Activated B cell treated with CpG ODN at 0.5 μM for 24 hours (primary cell): ENCODE measurements at regions of chr1 and their contacts with region 1.

Region 1: GRCh38 chr1:12124693-12125421 is 41.9 kb upstream of the TNFRSF1B start:
- DNase-seq: peak; percentile 68
- ATAC-seq: peak; percentile 76
- H3K4me3 Mint-ChIP-seq: peak overlapping the region; percentile 50
- H3K27ac Mint-ChIP-seq: peak overlapping the region; percentile 64
- H3K4me1 Mint-ChIP-seq: peaks cover 32% of the 10 kb centered on the region
- H3K27me3 Mint-ChIP-seq: no peaks in the 10 kb centered on the region
- CTCF ChIP-seq: peak; percentile 91

Region 2: GRCh38 chr1:12087797-12088314 is 37.0 kb before region 1 on chr1:
- CTCF ChIA-PET with region 1: interaction called, 10 read pairs
- POLR2A ChIA-PET with region 1: no interaction called
- intact Hi-C with region 1: no loop called
- DNase-seq: peak; percentile 45
- ATAC-seq: peak; percentile 88
- H3K4me3 Mint-ChIP-seq: peak overlapping the region; percentile 53
- H3K27ac Mint-ChIP-seq: peak overlapping the region; percentile 95
- H3K4me1 Mint-ChIP-seq: peaks cover 45% of the 10 kb centered on the region
- H3K27me3 Mint-ChIP-seq: no peaks in the 10 kb centered on the region
- CTCF ChIP-seq: no peak

Region 3: DNA sequence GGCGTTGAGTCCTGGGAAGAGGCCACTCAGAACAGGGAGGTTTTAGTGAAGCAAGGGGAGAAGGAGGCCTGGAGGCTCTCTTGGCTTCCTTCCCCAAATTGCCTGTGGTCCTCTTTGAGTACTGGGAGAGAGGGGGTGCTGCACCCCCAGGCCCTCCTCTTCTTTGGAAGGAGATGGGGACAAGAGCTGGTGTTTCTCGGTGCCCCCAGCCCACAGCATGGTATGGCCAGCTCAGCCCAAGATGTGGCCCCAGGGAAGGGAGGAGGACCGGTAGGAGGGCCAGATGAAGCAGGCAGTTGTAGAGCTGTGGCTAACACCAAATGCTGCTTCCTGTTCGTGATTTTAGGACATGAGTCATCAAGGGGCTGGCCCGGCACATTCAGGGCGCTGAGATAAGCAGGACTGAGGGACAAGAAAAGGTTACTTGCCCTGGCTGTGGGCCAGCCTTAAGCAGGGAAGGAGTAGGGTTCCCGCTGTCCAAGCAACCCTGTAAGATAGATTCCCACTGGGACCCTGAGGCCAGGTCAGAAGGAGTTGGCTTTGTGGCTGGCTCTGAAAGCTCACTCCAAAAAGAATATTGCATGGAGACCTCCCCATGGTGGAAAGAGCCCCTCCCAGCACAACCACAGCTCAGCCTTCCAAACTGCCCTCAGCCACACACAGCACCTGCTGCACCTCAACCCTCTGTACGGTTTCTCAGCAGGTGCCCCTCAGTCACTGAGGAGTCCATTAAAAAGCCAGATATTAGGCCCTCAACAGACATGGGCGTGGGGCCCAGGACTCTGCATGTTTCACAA is 37.0 kb after region 1 on chr1:
- CTCF ChIA-PET with region 1: interaction called, 19 read pairs
- POLR2A ChIA-PET with region 1: interaction called, 34 read pairs
- intact Hi-C with region 1: loop called (anchors 1 kb)
- DNase-seq: peak; percentile 55
- ATAC-seq: peak; percentile 78
- H3K4me3 Mint-ChIP-seq: peak overlapping the region; percentile 63
- H3K27ac Mint-ChIP-seq: peak overlapping the region; percentile 91
- H3K4me1 Mint-ChIP-seq: peaks cover 74% of the 10 kb centered on the region
- H3K27me3 Mint-ChIP-seq: no peaks in the 10 kb centered on the region
- CTCF ChIP-seq: no peak

Region 4: DNA sequence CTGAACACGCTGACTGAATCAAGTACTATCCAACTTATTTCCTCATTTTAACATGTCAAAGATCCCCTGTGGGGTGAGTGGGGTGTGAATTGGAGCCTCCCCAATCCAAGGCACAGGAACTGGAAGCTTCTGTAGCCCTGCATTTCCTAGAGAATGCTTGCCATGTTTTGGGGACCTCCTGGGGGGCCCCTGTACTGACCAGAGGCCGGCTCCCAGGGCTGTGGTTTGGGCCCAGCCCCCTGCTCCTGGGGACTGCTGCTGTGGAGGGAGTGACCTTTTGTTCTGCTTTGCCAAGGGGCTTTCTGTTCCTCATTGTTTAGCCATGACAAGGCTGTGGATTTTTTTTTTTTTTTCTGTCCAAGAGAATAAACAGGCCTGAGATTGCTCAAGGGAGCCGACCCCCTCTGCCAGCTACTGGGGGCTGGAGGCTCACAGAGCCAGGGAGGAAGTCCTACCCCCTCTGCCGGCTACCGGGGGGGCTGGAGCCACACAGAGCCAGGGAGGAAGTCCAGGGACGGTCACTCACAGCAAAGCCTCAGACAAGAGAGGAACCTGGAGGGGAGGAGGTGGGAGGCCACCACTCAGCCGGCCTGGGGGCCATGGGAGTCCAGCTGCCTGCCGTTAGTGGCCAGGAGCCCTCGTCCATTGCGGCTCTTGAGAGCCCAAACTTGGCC is 59.3 kb after region 1 on chr1:
- CTCF ChIA-PET with region 1: interaction called, 49 read pairs
- POLR2A ChIA-PET with region 1: interaction called, 4 read pairs
- intact Hi-C with region 1: loop called (anchors 1 kb)
- DNase-seq: no peak
- ATAC-seq: peak; percentile 71
- H3K4me3 Mint-ChIP-seq: peak overlapping the region; percentile 48
- H3K27ac Mint-ChIP-seq: peak overlapping the region; percentile 70
- H3K4me1 Mint-ChIP-seq: peaks cover 73% of the 10 kb centered on the region
- H3K27me3 Mint-ChIP-seq: no peaks in the 10 kb centered on the region
- CTCF ChIP-seq: no peak

Region 5: DNA sequence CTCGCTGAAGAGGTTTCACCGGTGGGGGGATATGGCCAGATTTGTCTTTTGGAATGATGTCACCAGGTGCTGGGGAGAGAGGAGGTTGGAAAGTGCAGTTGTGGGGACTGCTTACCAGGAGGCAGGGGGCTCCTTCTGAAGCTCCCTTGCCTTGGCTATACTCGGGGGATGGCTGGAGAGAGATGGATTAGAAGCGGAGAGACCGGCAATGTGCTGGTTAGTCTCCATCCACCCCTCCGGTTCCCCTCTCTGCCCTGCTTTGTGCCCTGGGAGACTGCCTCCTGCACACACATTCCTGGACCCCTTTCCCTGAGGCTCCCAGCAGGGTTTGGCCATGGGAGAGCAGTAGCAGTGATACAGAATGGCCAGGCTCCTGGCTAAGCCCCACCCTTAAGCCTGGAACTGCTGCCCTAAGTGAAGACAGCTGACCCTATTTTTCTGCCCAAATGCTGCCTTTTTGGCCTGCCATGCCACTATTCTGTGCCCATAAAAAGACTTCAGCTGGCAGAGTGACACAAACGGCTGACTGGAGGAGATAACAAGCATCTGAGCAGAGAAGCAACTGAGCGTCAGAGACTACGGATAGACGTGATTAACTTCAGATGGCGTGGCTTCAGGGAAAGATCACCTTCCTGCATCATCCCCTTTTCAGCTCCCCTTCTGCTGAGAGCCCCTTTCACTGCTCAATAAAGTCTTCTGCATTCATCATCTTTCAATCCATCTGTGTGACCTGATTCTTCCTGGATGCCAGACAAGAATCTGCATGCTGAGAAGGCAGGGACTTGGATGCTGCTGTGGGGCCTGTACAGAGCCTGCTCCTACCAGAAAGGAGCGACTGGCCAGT is 90.5 kb after region 1 on chr1:
- CTCF ChIA-PET with region 1: interaction called, 261 read pairs
- POLR2A ChIA-PET with region 1: interaction called, 103 read pairs
- intact Hi-C with region 1: no loop called
- DNase-seq: no peak
- ATAC-seq: no peak
- H3K4me3 Mint-ChIP-seq: no peak overlapping the region
- H3K27ac Mint-ChIP-seq: no peak overlapping the region
- H3K4me1 Mint-ChIP-seq: peaks cover 19% of the 10 kb centered on the region
- H3K27me3 Mint-ChIP-seq: no peaks in the 10 kb centered on the region
- CTCF ChIP-seq: no peak

Region 6: DNA sequence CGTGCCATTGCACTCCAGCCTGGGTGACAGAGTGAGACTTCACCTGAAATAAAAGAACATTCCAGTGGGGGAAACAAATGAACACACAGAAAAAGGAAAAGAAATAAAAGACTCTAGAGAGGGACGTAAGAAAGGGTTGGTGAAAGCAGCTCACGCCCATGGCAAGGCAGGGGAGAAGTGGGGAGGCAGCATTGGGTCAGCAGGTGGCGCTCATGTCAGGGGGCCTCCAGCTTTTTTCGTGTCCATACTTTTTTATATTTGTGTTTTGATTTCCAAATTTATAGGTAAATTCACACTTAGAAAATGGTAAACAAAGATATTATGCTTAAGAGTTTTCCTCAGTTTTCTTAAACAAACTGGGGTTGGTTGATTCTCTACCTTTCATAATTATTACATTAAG is 150.5 kb after region 1 on chr1:
- CTCF ChIA-PET with region 1: interaction called, 14 read pairs
- POLR2A ChIA-PET with region 1: interaction called, 3 read pairs
- intact Hi-C with region 1: no loop called
- DNase-seq: no peak
- ATAC-seq: no peak
- H3K4me3 Mint-ChIP-seq: no peak overlapping the region
- H3K27ac Mint-ChIP-seq: no peak overlapping the region
- H3K4me1 Mint-ChIP-seq: no peaks in the 10 kb centered on the region
- H3K27me3 Mint-ChIP-seq: no peaks in the 10 kb centered on the region
- CTCF ChIP-seq: no peak